PC-9 (cell line): ENCODE measurements at regions of chrX and their contacts with region 1.

Region 1: GRCh38 chrX:52558140-52558539 is 41.3 kb upstream of the XAGE1B start:
- DNase-seq: no peak
- H3K4me3 ChIP-seq: no peak overlapping the region
- H3K27ac ChIP-seq: no peak overlapping the region
- H3K4me1 ChIP-seq: no peaks in the 10 kb centered on the region
- H3K27me3 ChIP-seq: peaks cover 16% of the 10 kb centered on the region; the same call in 1 of the 2 replicates
- CTCF ChIP-seq: no peak

Region 2: DNA sequence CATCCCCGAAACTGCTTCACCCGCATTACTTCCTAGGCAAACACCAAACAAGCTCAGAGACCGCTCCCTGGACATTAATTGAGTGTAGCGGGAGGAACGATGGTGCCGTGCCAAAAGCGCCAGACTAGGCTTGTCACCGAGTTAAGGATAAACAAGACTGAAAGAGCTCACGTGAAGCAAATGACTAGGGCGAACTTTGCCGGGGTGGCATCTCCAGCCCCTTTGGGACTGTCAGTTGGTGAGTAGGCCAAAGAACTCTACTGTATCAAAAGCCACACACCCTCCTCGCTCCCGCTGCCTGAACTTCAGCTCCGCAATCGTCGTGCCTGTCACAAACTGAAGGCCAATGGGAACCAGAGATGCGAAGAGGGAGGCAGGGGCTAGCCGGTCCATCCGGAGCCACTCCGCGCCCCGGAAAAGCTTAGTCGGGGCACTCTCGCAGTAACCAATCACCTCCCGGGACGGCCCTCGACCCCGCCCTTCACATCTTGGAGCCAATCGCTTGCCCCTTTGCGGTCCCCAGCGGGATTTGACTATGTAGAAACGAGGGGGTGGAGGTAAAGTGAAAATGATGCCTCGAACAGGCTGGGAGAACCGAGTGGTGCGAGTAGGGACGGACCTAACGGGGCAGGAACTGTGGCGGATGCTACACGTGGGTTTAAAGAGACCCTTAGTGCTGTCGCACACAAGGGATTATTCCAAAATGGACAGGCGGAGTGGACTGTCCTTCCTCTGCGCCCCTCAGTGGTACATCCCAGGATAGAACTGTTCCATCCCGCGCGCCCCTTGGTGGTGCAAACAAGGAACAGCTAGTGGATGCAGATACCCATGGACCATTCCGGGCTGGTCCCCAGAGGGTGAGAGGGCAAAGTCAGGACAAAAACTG is 437.2 kb after region 1 on chrX:
- CTCF ChIA-PET with region 1: no interaction called
- POLR2A ChIA-PET with region 1: interaction called, 12 read pairs
- intact Hi-C with region 1: no loop called
- DNase-seq: peak; percentile 80 to 97
- H3K4me3 ChIP-seq: peak overlapping the region; percentile 57; the same call in 1 of the 2 replicates
- H3K27ac ChIP-seq: peak overlapping the region; percentile 66
- H3K4me1 ChIP-seq: no peaks in the 10 kb centered on the region
- H3K27me3 ChIP-seq: no peaks in the 10 kb centered on the region
- CTCF ChIP-seq: peak; percentile 59